B cell (primary cell): ENCODE measurements at regions of chr4 and their contacts with region 1.

Region 1: DNA sequence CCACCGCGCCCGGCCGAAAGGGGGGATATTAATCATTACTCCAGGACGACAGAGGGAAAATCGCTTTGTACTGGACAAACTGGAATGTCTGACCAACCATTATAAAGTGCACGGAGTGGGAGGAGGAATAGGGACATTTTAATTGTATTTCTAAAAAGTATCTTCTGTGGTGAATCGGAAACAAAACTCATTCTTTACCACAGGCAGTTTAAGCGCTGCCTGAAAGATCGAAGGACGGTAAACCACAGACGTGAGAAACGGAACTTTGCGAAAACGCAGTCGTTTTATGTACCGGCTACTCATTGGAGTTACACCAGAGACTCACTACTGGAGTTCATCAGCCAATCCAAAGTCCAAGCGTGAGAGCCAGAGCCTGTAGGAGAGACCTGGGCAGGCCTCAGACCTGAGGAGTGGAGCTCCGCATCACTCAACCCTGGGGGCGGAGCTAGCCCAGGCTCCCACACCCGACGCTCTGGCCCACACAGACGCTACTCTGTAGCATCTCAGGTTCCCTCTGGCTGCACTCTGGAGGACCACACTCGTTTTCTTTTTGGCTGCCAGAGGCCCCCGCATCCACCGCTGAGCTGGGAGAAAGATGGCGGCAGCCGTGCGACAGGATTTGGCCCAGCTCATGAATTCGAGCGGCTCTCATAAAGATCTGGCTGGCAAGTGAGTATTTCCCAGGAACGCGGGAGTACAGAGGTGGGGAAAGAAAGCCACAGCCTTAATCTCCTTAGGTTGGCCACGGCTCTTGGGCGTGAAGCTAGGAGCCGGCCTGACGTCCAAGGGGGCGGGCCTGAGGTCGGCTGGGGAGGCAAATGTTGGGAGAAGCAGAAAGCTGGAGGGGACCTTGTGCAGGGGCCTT is at the start of gene COPS4:
- DNase-seq: peak; percentile 99
- ATAC-seq: peak; percentile 95
- H3K4me3 ChIP-seq: peak within 1 kb of the TSS; percentile 80 to 94 (median 91)
- H3K4me3 Mint-ChIP-seq: peak within 1 kb of the TSS; percentile 98
- H3K27ac ChIP-seq: peak within 1 kb of the TSS; percentile 84 to 86
- H3K27ac Mint-ChIP-seq: peak within 1 kb of the TSS; percentile 98
- H3K4me1 ChIP-seq: peaks cover 10 to 16% of the 10 kb centered on the region in 2 donors
- H3K4me1 Mint-ChIP-seq: peaks cover 34% of the 10 kb centered on the region
- H3K27me3 ChIP-seq: no peaks in the 10 kb centered on the region
- H3K27me3 Mint-ChIP-seq: no peaks in the 10 kb centered on the region
- CTCF ChIP-seq: peak; percentile 34
- total RNA-seq, gene COPS4: 24.5 and 32.8 TPM in 2 replicates

Region 2: GRCh38 chr4:82890901-82891706 is 143.8 kb before region 1 on chr4 and contains the start of gene SEC31A:
- CTCF ChIA-PET with region 1: interaction called, 3 read pairs
- POLR2A ChIA-PET with region 1: no interaction called
- intact Hi-C with region 1: loop called (anchors 1 kb)
- DNase-seq: peak; percentile 98
- ATAC-seq: peak; percentile 92
- H3K4me3 ChIP-seq: peak within 1 kb of the TSS; percentile 76 to 94 (median 85)
- H3K4me3 Mint-ChIP-seq: peak within 1 kb of the TSS; percentile 92
- H3K27ac ChIP-seq: peak within 1 kb of the TSS; percentile 87 to 93
- H3K27ac Mint-ChIP-seq: peak within 1 kb of the TSS; percentile 97
- H3K4me1 ChIP-seq: peaks cover 17 to 18% of the 10 kb centered on the region in 2 donors
- H3K4me1 Mint-ChIP-seq: peaks cover 35% of the 10 kb centered on the region
- H3K27me3 ChIP-seq: no peaks in the 10 kb centered on the region
- H3K27me3 Mint-ChIP-seq: no peaks in the 10 kb centered on the region
- CTCF ChIP-seq: peak; percentile 2
- total RNA-seq, gene SEC31A: 134 and 141 TPM in 2 replicates

Region 3: DNA sequence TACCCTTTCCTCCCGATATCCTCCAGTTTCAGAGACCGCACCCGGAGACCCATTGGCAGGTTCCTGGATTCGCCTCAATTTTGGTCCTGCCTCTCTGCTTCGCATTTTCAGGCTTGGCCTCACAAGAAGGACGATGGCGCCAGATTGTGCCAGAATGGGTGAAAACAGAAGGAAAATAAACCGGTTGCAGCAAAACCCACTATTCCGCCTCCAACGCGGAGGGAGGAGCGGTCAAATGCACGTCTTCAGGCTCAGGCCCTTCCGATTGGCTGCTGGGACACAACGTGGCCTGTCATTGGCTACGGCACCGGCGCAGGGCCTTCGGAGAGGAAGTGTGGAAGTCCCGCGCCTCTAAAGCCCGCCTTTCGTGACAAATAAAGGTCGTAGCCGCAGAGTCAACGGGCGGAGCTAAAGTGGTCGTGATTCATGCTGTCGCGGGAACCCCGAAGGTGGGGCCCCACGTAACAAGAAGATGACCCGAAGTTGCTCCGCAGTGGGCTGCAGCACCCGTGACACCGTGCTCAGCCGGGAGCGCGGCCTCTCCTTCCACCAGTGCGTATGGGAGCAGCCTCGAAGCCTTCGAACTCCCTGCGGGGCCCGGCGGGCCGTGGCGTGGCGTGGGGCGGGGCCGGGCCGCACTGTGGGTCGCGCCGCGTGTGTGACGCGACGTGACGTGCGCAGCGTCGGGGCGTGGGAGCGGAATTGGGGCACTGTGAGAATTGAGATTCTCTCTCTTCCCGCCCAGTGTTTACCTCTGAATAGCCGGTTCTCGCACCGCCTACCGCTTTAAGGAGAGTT is 134.3 kb before region 1 on chr4 and contains the start of gene THAP9:
- CTCF ChIA-PET with region 1: interaction called, 4 read pairs
- POLR2A ChIA-PET with region 1: interaction called, 10 read pairs
- intact Hi-C with region 1: loop called (anchors 1 kb)
- DNase-seq: peak; percentile 99
- ATAC-seq: peak; percentile 90
- H3K4me3 ChIP-seq: peak within 1 kb of the TSS; percentile 73 to 92 (median 90)
- H3K4me3 Mint-ChIP-seq: no peak within 1 kb of the TSS
- H3K27ac ChIP-seq: peak within 1 kb of the TSS; percentile 97 to 98
- H3K27ac Mint-ChIP-seq: no peak within 1 kb of the TSS
- H3K4me1 ChIP-seq: peaks cover 22 to 27% of the 10 kb centered on the region in 2 donors
- H3K4me1 Mint-ChIP-seq: peaks cover 11% of the 10 kb centered on the region
- H3K27me3 ChIP-seq: no peaks in the 10 kb centered on the region
- H3K27me3 Mint-ChIP-seq: no peaks in the 10 kb centered on the region
- CTCF ChIP-seq: no peak
- total RNA-seq, gene THAP9: 6.8 and 7.8 TPM in 2 replicates

Region 4: GRCh38 chr4:83362492-83363329 is 327.8 kb after region 1 on chr4:
- CTCF ChIA-PET with region 1: no interaction called
- POLR2A ChIA-PET with region 1: no interaction called
- intact Hi-C with region 1: no loop called
- DNase-seq: peak; percentile 28
- ATAC-seq: peak; percentile 31
- H3K4me3 ChIP-seq: no peak overlapping the region
- H3K4me3 Mint-ChIP-seq: no peak overlapping the region
- H3K27ac ChIP-seq: no peak overlapping the region
- H3K27ac Mint-ChIP-seq: no peak overlapping the region
- H3K4me1 ChIP-seq: peaks cover 0 to 4% of the 10 kb centered on the region in 2 donors
- H3K4me1 Mint-ChIP-seq: peaks cover 7% of the 10 kb centered on the region
- H3K27me3 ChIP-seq: no peaks in the 10 kb centered on the region
- H3K27me3 Mint-ChIP-seq: no peaks in the 10 kb centered on the region
- CTCF ChIP-seq: peak; percentile 35

Region 5: GRCh38 chr4:83484500-83485461 is 449.9 kb after region 1 on chr4 and contains the start of gene ABRAXAS1:
- CTCF ChIA-PET with region 1: no interaction called
- POLR2A ChIA-PET with region 1: no interaction called
- intact Hi-C with region 1: loop called (anchors 1 kb)
- DNase-seq: peak; percentile 97
- ATAC-seq: peak; percentile 97
- H3K4me3 ChIP-seq: peak within 1 kb of the TSS; percentile 71 to 87 (median 77)
- H3K4me3 Mint-ChIP-seq: peak within 1 kb of the TSS; percentile 99
- H3K27ac ChIP-seq: peak within 1 kb of the TSS; percentile 60 to 70
- H3K27ac Mint-ChIP-seq: peak within 1 kb of the TSS; percentile 95
- H3K4me1 ChIP-seq: peaks cover 10 to 17% of the 10 kb centered on the region in 2 donors
- H3K4me1 Mint-ChIP-seq: peaks cover 21% of the 10 kb centered on the region
- H3K27me3 ChIP-seq: no peaks in the 10 kb centered on the region
- H3K27me3 Mint-ChIP-seq: no peaks in the 10 kb centered on the region
- CTCF ChIP-seq: no peak
- total RNA-seq, gene ABRAXAS1: 34.4 and 38.4 TPM in 2 replicates